Activated naive CD4-positive, alpha-beta T cell treated with anti-CD3 and anti-CD28 coated beads for 36 hours (primary cell): ENCODE measurements at regions of chr15 and their contacts with region 1.

Region 1: DNA sequence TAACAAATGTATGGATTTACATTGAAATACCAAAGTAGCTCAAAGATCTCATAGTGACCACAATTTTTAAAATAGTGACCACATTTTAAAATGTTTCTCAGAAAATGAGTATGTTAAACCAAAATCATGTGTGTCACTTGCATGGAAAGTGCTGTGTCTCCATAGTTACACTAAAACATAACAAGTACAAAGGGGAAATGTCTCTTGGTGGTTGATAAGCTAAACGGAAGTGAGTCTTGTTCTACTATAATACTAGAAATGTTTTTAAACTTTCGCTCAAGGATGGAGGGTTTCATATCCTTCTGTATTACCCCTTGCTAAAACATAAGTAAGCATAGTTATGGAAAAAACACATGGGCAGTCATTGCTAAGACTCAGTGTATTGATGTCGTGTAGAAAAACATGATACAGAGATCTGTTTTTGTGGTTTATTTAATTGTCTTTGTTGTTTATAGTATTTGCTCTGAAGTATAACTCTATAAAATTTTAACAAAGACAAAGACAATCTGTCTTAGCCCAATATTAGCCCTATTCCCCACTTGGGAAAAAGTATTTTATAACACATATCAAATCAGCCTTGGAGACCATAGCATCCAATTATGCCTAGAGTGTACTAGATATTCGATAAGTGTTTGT is 27.0 kb upstream of the DENND4A start:
- DNase-seq: no peak
- H3K4me3 Mint-ChIP-seq: peak overlapping the region; percentile 22
- H3K27ac Mint-ChIP-seq: peak overlapping the region; percentile 59
- H3K4me1 Mint-ChIP-seq: peaks cover 47% of the 10 kb centered on the region
- H3K27me3 Mint-ChIP-seq: no peaks in the 10 kb centered on the region

Region 2: GRCh38 chr15:65675551-65675950 is 143.5 kb before region 1 on chr15:
- CTCF ChIA-PET with region 1: no interaction called
- intact Hi-C with region 1: no loop called
- DNase-seq: no peak
- H3K4me3 Mint-ChIP-seq: no peak overlapping the region
- H3K27ac Mint-ChIP-seq: no peak overlapping the region
- H3K4me1 Mint-ChIP-seq: no peaks in the 10 kb centered on the region
- H3K27me3 Mint-ChIP-seq: no peaks in the 10 kb centered on the region

Region 3: DNA sequence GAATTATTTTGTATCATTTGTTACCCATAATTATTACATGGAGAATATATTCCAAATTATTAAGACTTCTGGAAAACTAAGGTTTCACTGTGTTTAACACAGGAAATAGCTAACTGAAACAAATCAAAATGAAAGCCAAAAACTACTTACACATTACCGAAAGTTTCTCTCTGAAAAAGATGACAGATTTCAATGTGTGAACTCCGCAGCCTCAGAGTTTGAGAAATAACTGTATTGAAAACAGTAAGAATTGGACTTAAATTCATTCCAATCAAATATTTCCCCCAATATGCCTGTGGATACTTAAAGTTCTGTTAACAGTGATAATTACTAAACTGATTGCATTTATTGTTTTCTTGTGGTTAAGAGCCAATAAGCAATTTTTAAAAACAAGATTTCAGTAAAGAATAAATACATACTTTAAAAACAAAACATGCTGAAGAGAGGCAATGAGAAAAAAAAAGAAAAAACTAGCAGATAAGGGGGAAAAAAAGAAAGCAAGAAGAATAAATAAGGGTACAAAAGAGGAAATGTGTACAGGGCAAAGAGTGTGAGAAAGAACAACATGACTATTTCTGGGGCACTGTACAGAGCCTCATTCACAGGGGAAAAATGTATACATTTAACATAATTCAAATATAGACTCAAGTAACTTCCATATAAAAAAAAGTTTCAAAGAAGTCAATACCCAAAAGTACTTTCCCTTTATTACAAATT is 57.7 kb before region 1 on chr15:
- CTCF ChIA-PET with region 1: no interaction called
- intact Hi-C with region 1: loop called (anchors 1 kb)
- DNase-seq: peak; percentile 21
- H3K4me3 Mint-ChIP-seq: no peak overlapping the region
- H3K27ac Mint-ChIP-seq: peak overlapping the region; percentile 31
- H3K4me1 Mint-ChIP-seq: peaks cover 34% of the 10 kb centered on the region
- H3K27me3 Mint-ChIP-seq: no peaks in the 10 kb centered on the region

Region 4: DNA sequence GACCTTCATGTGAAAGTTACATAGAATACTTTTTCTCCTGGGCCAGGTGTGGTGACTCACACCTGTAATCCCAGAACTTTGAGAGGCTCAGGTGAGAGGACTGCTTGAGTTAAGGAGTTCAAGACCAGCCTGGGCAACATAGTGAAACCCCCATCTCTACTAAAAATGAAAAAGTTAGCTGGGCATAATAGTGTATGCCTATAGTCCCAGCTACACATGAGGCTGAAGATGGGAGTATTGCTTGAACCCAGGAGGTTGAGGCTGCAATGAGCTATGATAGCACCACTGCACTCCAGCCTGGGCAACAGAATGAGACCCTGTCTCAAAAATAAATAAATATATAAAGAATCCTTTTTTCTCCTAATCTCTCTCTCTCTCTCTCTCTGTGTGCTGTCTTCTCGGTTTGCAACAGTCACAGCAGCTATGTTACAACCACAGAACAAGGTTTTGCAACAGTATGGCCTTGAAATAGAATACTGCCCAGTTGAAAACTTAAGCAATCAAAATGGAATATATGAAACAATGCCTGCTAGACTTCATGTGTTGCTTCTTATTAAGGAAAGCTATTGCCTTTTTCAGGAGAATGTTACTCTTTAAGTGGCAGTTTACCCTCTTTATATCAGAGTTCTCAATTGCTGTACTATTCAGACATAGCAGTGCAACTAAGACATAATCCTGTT is 14.7 kb before region 1 on chr15:
- CTCF ChIA-PET with region 1: interaction called, 10 read pairs
- intact Hi-C with region 1: loop called (anchors 1 kb)
- DNase-seq: no peak
- H3K4me3 Mint-ChIP-seq: no peak overlapping the region
- H3K27ac Mint-ChIP-seq: peak overlapping the region; percentile 36
- H3K4me1 Mint-ChIP-seq: peaks cover 36% of the 10 kb centered on the region
- H3K27me3 Mint-ChIP-seq: no peaks in the 10 kb centered on the region